Dorsolateral prefrontal cortex (tissue), 120 donors: ENCODE measurements at regions of chr13 and their contacts with region 1.

Region 1: DNA sequence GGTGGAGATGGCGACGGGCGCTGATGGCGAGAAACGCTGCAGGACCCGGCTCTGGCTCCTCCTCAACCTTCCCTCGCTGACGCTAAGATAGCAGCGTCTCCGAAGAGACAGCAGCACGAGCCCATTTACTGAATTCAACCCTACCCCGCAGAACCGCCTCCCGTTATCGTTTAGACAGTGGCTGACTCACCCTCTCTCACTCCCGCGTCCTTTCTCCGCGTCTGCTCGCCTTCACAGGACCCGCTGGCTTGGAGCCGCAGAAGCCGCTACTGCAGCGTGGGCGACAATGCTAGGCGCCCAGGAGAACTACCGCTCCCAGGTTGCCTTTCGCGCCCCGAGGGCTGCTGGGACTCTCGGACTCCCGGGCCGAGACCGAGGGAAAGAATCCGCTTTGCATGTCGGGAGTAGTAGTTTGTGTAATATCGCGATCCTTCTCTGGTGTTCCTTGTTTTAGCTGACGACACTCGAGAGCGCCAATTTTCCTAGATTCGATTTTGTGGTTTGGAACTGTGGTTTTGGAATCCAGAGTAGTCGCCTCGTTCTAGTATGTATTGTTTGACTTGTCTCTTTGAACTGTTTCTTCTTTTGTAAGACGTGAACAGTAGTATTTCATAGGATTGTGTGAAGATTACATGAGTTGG is at the start of gene KBTBD6:
- DNase-seq: peak; percentile 95 to 98 (median 97)
- H3K4me3 ChIP-seq: peak within 1 kb of the TSS; percentile 54 to 93 (median 82)
- H3K27ac ChIP-seq: peak within 1 kb of the TSS; percentile 52 to 95 (median 88)
- H3K27me3 ChIP-seq: no peaks in the 10 kb centered on the region
- CTCF ChIP-seq: peak in 38 of 56 donors; percentile 3 to 54 (median 30)
- total RNA-seq, gene KBTBD6: 14.9 to 35.1 (median 24.4) TPM

Region 2: GRCh38 chr13:40878321-40878720 is 254.3 kb before region 1 on chr13:
- intact Hi-C with region 1: no loop called
- DNase-seq: no peak
- H3K4me3 ChIP-seq: no peak overlapping the region
- H3K27ac ChIP-seq: no peak overlapping the region
- H3K27me3 ChIP-seq: no peaks in the 10 kb centered on the region
- CTCF ChIP-seq: no peak

Region 3: DNA sequence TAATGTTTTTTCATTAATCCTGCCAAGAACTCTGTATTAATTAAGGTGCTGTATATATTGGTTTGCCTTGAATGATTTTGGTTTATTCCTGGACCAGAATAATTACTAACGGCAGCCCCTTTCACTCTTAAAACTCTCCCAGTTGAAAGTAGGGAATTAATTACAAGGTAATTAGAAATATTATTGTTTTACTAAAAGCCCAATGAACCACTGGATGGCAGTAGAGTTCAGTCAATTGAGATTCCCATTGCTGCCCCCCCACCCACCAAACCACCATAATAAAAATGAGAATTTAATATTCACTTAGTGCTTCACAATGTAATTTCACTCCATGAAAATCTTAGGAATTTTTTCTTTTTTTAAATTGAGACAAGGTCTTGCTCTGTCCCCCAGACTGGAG is 57.6 kb before region 1 on chr13:
- intact Hi-C with region 1: loop called in 1 of 2 experiments (anchors 5 kb)
- DNase-seq: no peak
- H3K4me3 ChIP-seq: no peak overlapping the region
- H3K27ac ChIP-seq: peak overlapping the region in 1 of 59 donors; percentile 2
- H3K27me3 ChIP-seq: no peaks in the 10 kb centered on the region
- CTCF ChIP-seq: peak; percentile 43 to 80 (median 64)

Region 4: GRCh38 chr13:41193919-41194824 is 61.5 kb after region 1 on chr13 and contains the start of gene KBTBD7:
- intact Hi-C with region 1: loop called (anchors 1 kb)
- DNase-seq: peak; percentile 86 to 98 (median 94)
- H3K4me3 ChIP-seq: peak within 1 kb of the TSS; percentile 56 to 96 (median 86)
- H3K27ac ChIP-seq: peak within 1 kb of the TSS; percentile 61 to 97 (median 90)
- H3K27me3 ChIP-seq: no peaks in the 10 kb centered on the region
- CTCF ChIP-seq: peak in 38 of 56 donors; percentile 13 to 55 (median 32)
- total RNA-seq, gene KBTBD7: 9.2 to 16.8 (median 13.1) TPM

Region 5: GRCh38 chr13:41263261-41264027 is 130.8 kb after region 1 on chr13 and contains the start of gene MTRF1:
- intact Hi-C with region 1: loop called in 1 of 2 experiments (anchors 5 kb)
- DNase-seq: peak; percentile 72 to 91 (median 86)
- H3K4me3 ChIP-seq: peak within 1 kb of the TSS; percentile 49 to 98 (median 78)
- H3K27ac ChIP-seq: peak within 1 kb of the TSS in 58 of 59 donors; percentile 58 to 97 (median 91)
- H3K27me3 ChIP-seq: no peaks in the 10 kb centered on the region
- CTCF ChIP-seq: peak in 15 of 56 donors; percentile 5 to 48 (median 15)
- total RNA-seq, gene MTRF1: 7.2 to 34.6 (median 15.6) TPM

Region 6: DNA sequence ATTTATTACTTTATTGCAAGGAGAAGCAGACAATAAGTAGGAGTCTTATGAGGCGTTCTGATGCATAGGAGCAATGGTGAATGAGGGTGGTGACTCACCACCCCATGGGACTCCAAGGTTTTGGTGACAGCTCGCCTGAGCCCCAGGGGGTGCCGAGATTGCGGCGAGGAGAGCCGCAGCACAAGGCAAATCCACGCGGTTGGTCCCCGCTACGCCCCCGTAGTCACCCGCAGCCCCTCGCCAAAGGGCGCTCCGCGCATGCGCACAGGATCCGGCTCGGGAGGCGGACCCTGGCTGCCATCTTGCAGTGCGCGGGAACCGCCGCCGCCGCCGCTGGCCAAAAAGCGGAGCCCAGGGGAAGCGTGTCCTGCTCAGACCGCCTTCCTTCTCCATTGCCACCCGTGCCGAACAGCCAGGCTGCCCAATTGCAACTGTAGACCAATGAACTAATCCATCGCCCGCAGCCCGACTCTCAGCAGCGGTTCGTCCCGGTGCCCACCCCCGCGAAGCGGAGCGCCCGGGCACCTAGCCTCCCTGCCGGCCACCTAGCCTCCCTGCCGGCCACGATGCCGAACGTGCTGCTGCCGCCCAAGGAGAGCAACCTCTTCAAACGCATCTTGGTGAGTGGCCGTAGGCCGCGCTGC is 178.5 kb after region 1 on chr13 and contains the start of gene NAA16:
- intact Hi-C with region 1: loop called in 1 of 2 experiments (anchors 5 kb)
- DNase-seq: peak; percentile 81 to 95 (median 88)
- H3K4me3 ChIP-seq: peak within 1 kb of the TSS; percentile 66 to 100 (median 96)
- H3K27ac ChIP-seq: peak within 1 kb of the TSS; percentile 63 to 100 (median 97)
- H3K27me3 ChIP-seq: no peaks in the 10 kb centered on the region
- CTCF ChIP-seq: peak in 37 of 56 donors; percentile 5 to 53 (median 28)
- total RNA-seq, gene NAA16: 20.9 to 64.0 (median 31.6) TPM